Activated CD4-positive, alpha-beta T cell treated with anti-CD3 and anti-CD28 coated beads for 36 hours (primary cell): ENCODE measurements at regions of chr5 and their contacts with region 1.

Region 1: GRCh38 chr5:139306197-139306596 is 12.7 kb downstream of the MATR3 start:
- DNase-seq: no peak
- ATAC-seq: peak; percentile 59
- H3K4me3 Mint-ChIP-seq: peak overlapping the region; percentile 3
- H3K27ac Mint-ChIP-seq: peak overlapping the region; percentile 75
- H3K4me1 Mint-ChIP-seq: peaks cover 94% of the 10 kb centered on the region
- H3K27me3 Mint-ChIP-seq: no peaks in the 10 kb centered on the region

Region 2: GRCh38 chr5:139282197-139282557 is 24.0 kb before region 1 on chr5:
- CTCF ChIA-PET with region 1: no interaction called
- POLR2A ChIA-PET with region 1: no interaction called
- intact Hi-C with region 1: no loop called
- DNase-seq: no peak
- ATAC-seq: no peak
- H3K4me3 Mint-ChIP-seq: no peak overlapping the region
- H3K27ac Mint-ChIP-seq: no peak overlapping the region
- H3K4me1 Mint-ChIP-seq: peaks cover 32% of the 10 kb centered on the region
- H3K27me3 Mint-ChIP-seq: no peaks in the 10 kb centered on the region

Region 3: GRCh38 chr5:139293504-139294373 is 12.5 kb before region 1 on chr5 and contains the start of gene MATR3:
- CTCF ChIA-PET with region 1: interaction called, 9 read pairs
- POLR2A ChIA-PET with region 1: interaction called, 11 read pairs
- intact Hi-C with region 1: loop called in 1 of 2 experiments (anchors 1 kb)
- DNase-seq: peak; percentile 98
- ATAC-seq: peak; percentile 92
- H3K4me3 Mint-ChIP-seq: peak within 1 kb of the TSS; percentile 97
- H3K27ac Mint-ChIP-seq: peak within 1 kb of the TSS; percentile 99
- H3K4me1 Mint-ChIP-seq: peaks cover 37% of the 10 kb centered on the region
- H3K27me3 Mint-ChIP-seq: no peaks in the 10 kb centered on the region
- total RNA-seq, gene MATR3: 113 to 133 TPM

Region 4: GRCh38 chr5:140054086-140054689 is 748.0 kb after region 1 on chr5:
- CTCF ChIA-PET with region 1: no interaction called
- POLR2A ChIA-PET with region 1: no interaction called
- intact Hi-C with region 1: no loop called
- DNase-seq: no peak
- ATAC-seq: no peak
- H3K4me3 Mint-ChIP-seq: no peak overlapping the region
- H3K27ac Mint-ChIP-seq: no peak overlapping the region
- H3K4me1 Mint-ChIP-seq: no peaks in the 10 kb centered on the region
- H3K27me3 Mint-ChIP-seq: peaks cover 15% of the 10 kb centered on the region